H1 (cell line): ENCODE measurements at regions of chr5 and their contacts with region 1.

Region 1: GRCh38 chr5:65708145-65708544 is 13.8 kb downstream of the SGTB start:
- DNase-seq: no peak
- H3K4me3 ChIP-seq: no peak overlapping the region
- H3K27ac ChIP-seq: no peak overlapping the region
- H3K4me1 ChIP-seq: no peaks in the 10 kb centered on the region
- H3K27me3 ChIP-seq: no peaks in the 10 kb centered on the region
- CTCF ChIP-seq: no peak
- EP300 ChIP-seq: no peak
- POLR2A ChIP-seq: no peak
- RAD21 ChIP-seq: no peak

Region 2: DNA sequence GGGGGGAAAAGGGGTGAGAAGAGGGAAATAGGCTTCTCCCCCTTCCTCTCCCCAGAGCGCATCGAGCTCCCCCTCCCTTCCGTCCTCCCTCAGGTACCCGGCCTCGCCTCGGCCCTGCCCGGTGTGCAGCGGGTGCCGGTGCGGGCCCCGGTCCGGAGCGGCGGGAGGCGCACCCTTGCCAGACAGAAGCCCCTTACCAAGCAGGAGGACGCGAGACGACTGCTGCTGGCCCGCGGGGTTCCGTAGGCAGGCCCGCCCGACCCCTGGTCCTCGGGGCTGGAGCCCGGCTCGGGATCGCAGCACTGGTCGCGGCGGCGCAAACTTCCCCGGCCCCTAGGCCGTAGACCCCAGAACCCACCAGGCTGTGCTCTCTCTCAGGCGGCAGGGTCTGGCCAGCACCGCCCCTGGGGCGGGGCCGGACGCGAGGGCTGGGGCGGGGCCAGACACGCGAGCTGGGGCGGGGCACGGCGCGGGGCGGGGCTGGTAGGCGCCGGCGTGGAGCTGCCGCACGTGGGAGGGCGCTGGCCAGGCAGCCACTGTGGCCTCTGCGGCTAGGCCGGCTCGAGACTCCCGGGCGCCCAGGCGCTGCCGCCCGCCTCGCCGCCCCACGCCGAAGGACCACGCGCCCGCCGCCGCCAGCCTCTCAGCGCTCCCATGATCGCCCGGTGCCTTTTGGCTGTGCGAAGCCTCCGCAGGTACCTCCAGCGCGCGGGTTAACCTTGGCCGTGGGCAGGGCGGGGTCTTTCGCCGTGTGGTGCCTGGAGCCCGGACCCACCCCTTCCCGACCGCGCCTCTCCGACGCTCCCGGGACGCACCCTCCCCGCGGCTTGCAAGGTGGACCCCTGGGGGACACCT is 13.8 kb after region 1 on chr5 and contains the starts of genes NLN and SGTB:
- CTCF ChIA-PET with region 1: interaction called, 6 read pairs
- POLR2A ChIA-PET with region 1: interaction called, 12 read pairs
- DNase-seq: peak; percentile 46 to 93
- H3K4me3 ChIP-seq: peak within 1 kb of the TSS; percentile 78 to 95 (median 88)
- H3K27ac ChIP-seq: peak within 1 kb of the TSS; percentile 77
- H3K4me1 ChIP-seq: no peaks in the 10 kb centered on the region
- H3K27me3 ChIP-seq: no peaks in the 10 kb centered on the region
- CTCF ChIP-seq: no peak
- EP300 ChIP-seq: no peak
- POLR2A ChIP-seq: peak; percentile 72 to 92
- RAD21 ChIP-seq: peak in 1 of 2 experiments; percentile 15; a peak in 1 of 4 replicates
- total RNA-seq, gene NLN: 186 and 192 TPM in 2 replicates
- total RNA-seq, gene SGTB: 17.8 and 18.7 TPM in 2 replicates

Region 3: DNA sequence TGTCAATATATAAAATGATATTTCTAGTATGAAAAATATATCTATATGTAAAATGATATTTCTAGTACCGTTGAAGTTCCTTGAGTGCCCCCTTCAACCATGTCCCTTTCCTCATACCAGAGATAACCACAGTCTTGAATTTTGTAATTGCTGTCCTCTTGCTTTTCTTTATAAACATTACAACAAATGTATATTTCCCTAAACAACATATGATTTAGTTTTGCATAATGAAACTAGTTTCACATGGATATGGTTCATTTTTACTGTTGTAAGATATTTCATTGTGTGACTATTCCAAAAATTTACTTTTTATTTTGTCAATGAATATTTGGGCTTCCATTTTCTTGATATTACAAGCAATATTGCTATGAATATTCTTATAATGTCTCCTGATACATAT is 27.9 kb after region 1 on chr5:
- CTCF ChIA-PET with region 1: no interaction called
- POLR2A ChIA-PET with region 1: no interaction called
- DNase-seq: no peak
- H3K4me3 ChIP-seq: no peak overlapping the region
- H3K27ac ChIP-seq: no peak overlapping the region
- H3K4me1 ChIP-seq: no peaks in the 10 kb centered on the region
- H3K27me3 ChIP-seq: peaks cover 0 to 1% (median 0%) of the 10 kb centered on the region in 4 experiments; a peak in 1 of 7 replicates
- CTCF ChIP-seq: no peak
- EP300 ChIP-seq: no peak
- POLR2A ChIP-seq: no peak
- RAD21 ChIP-seq: no peak

Region 4: GRCh38 chr5:65769539-65769938 is 61.4 kb after region 1 on chr5:
- CTCF ChIA-PET with region 1: no interaction called
- POLR2A ChIA-PET with region 1: no interaction called
- DNase-seq: no peak
- H3K4me3 ChIP-seq: no peak overlapping the region
- H3K27ac ChIP-seq: no peak overlapping the region
- H3K4me1 ChIP-seq: peaks cover 0 to 5% (median 0%) of the 10 kb centered on the region in 4 experiments; a peak in 2 of 7 replicates
- H3K27me3 ChIP-seq: no peaks in the 10 kb centered on the region
- CTCF ChIP-seq: no peak
- EP300 ChIP-seq: no peak
- POLR2A ChIP-seq: no peak
- RAD21 ChIP-seq: no peak